PC-3 (cell line): ENCODE measurements at regions of chr19 and their contacts with region 1.

Region 1: GRCh38 chr19:17282488-17283255 is 971 bp downstream of the ANKLE1 start:
- DNase-seq: peak; percentile 87
- ATAC-seq: peak; percentile 94
- H3K4me3 ChIP-seq: peak overlapping the region; percentile 57
- H3K27ac ChIP-seq: no peak overlapping the region
- H3K4me1 ChIP-seq: no peaks in the 10 kb centered on the region
- H3K27me3 ChIP-seq: no peaks in the 10 kb centered on the region
- CTCF ChIP-seq: peak; percentile 87

Region 2: DNA sequence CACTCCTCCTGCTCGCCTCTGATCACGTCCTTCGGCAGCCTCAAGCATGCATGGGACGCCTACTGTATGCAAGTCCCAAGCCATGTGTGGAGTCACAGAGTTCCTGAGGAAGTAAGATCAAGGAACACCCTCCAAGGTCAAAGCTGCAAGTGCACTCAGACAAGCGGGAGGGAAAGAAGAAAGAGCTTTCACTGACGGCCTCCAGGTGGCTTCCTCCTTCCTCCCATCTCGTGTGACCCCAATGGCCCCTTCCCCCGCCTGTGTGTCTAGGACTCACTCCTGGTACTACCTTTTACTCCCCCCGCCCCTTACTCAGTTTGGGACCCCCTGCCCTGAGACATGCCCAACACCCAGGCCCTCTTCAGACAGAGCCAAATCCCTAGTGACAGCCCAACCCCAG is 213.5 kb before region 1 on chr19:
- CTCF ChIA-PET with region 1: no interaction called
- POLR2A ChIA-PET with region 1: no interaction called
- intact Hi-C with region 1: loop called (anchors 1 kb)
- DNase-seq: no peak
- ATAC-seq: no peak
- H3K4me3 ChIP-seq: no peak overlapping the region
- H3K27ac ChIP-seq: no peak overlapping the region
- H3K4me1 ChIP-seq: peaks cover 6% of the 10 kb centered on the region; the same call in 1 of the 2 replicates
- H3K27me3 ChIP-seq: no peaks in the 10 kb centered on the region
- CTCF ChIP-seq: no peak

Region 3: GRCh38 chr19:17205237-17206140 is 77.2 kb before region 1 on chr19:
- CTCF ChIA-PET with region 1: no interaction called
- POLR2A ChIA-PET with region 1: no interaction called
- intact Hi-C with region 1: loop called (anchors 2 kb)
- DNase-seq: peak; percentile 64
- ATAC-seq: peak; percentile 61
- H3K4me3 ChIP-seq: no peak overlapping the region
- H3K27ac ChIP-seq: no peak overlapping the region
- H3K4me1 ChIP-seq: 0 out of 2 replicates have a peak, but pooled peaks cover 6% of the 10 kb centered on the region
- H3K27me3 ChIP-seq: no peaks in the 10 kb centered on the region
- CTCF ChIP-seq: peak; percentile 84

Region 4: GRCh38 chr19:17260842-17261325 is 21.8 kb before region 1 on chr19:
- CTCF ChIA-PET with region 1: no interaction called
- POLR2A ChIA-PET with region 1: no interaction called
- intact Hi-C with region 1: loop called (anchors 1 kb)
- DNase-seq: peak; percentile 89
- ATAC-seq: peak; percentile 100
- H3K4me3 ChIP-seq: no peak overlapping the region
- H3K27ac ChIP-seq: no peak overlapping the region
- H3K4me1 ChIP-seq: no peaks in the 10 kb centered on the region
- H3K27me3 ChIP-seq: no peaks in the 10 kb centered on the region
- CTCF ChIP-seq: peak; percentile 94